Naive thymus-derived CD4-positive, alpha-beta T cell (primary cell): ENCODE measurements at regions of chr20 and their contacts with region 1.

Region 1: DNA sequence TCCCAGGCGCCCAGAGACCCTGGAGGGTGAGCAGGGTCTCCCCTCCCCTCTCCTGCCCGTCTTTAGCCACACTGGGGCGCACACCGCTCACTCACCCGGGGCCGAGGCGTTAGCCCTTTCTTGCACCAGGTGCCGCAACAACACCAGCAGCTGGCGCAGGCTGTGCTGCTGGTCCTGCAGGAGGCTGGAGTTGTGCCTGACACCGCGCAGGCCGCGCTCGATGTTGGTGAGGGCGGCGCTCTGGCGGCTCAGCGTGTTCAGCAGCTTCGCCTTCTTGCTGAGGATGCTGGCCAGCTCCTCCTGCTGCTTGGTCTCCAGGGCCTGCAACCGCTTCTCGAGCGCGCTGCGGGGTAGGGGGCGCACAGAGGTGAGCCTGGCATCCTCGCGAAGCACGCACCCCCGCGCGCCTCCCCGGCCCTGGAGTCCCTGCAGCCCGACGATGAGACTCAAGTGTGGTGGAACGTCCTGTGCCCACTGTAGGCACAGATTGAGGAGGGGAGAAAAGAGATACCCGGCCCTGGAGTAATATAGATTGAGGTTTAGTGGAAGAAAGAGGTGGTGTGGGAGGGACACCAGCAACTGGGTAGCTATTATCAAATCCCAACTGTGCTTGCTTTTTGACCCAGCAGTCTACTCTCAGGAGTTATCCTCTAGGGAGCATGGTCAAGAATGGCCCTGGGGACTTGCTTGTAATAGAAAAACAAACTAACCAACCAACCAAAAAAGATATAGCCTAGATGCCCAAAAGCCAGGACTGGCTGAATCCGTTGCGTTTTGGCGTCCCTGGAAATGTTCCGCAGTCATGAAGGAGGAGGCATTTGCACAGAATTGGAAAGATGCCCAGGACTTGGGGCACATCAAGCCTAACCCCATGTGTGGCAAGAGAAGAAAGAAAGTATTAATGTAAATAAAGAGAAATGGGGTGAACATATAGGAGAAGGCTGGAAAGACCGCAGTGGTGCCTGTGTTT is 30.9 kb downstream of the ANGPT4 start:
- DNase-seq: peak in 2 of 9 donors; percentile 7 to 8
- ATAC-seq: no peak
- H3K4me3 ChIP-seq: no peak overlapping the region
- H3K4me3 Mint-ChIP-seq: no peak overlapping the region
- H3K27ac ChIP-seq: no peak overlapping the region
- H3K27ac Mint-ChIP-seq: no peak overlapping the region
- H3K4me1 ChIP-seq: no peaks in the 10 kb centered on the region
- H3K4me1 Mint-ChIP-seq: peaks cover 0 to 15% (median 5%) of the 10 kb centered on the region in 7 donors
- H3K27me3 ChIP-seq: no peaks in the 10 kb centered on the region
- H3K27me3 Mint-ChIP-seq: peaks cover 10 to 28% (median 17%) of the 10 kb centered on the region in 5 donors

Region 2: GRCh38 chr20:956330-956951 is 71.2 kb after region 1 on chr20:
- CTCF ChIA-PET with region 1: interaction called, 3 read pairs
- POLR2A ChIA-PET with region 1: no interaction called
- intact Hi-C with region 1: loop called in 1 of 2 experiments (anchors 10 kb)
- DNase-seq: peak; percentile 48 to 80 (median 69)
- ATAC-seq: peak; percentile 85
- H3K4me3 ChIP-seq: no peak overlapping the region
- H3K4me3 Mint-ChIP-seq: no peak overlapping the region
- H3K27ac ChIP-seq: no peak overlapping the region
- H3K27ac Mint-ChIP-seq: no peak overlapping the region
- H3K4me1 ChIP-seq: no peaks in the 10 kb centered on the region
- H3K4me1 Mint-ChIP-seq: peaks cover 0 to 8% (median 0%) of the 10 kb centered on the region in 7 donors
- H3K27me3 ChIP-seq: no peaks in the 10 kb centered on the region
- H3K27me3 Mint-ChIP-seq: peaks cover 18 to 55% (median 39%) of the 10 kb centered on the region in 5 donors